PC-3 (cell line): ENCODE measurements at regions of chr9 and their contacts with region 1.

Region 1: GRCh38 chr9:101317735-101318134 is 67.1 kb downstream of the BAAT start:
- DNase-seq: no peak
- ATAC-seq: no peak
- H3K4me3 ChIP-seq: no peak overlapping the region
- H3K27ac ChIP-seq: no peak overlapping the region
- H3K4me1 ChIP-seq: no peaks in the 10 kb centered on the region
- H3K27me3 ChIP-seq: 0 out of 2 replicates have a peak, but pooled peaks cover 5% of the 10 kb centered on the region
- CTCF ChIP-seq: no peak

Region 2: DNA sequence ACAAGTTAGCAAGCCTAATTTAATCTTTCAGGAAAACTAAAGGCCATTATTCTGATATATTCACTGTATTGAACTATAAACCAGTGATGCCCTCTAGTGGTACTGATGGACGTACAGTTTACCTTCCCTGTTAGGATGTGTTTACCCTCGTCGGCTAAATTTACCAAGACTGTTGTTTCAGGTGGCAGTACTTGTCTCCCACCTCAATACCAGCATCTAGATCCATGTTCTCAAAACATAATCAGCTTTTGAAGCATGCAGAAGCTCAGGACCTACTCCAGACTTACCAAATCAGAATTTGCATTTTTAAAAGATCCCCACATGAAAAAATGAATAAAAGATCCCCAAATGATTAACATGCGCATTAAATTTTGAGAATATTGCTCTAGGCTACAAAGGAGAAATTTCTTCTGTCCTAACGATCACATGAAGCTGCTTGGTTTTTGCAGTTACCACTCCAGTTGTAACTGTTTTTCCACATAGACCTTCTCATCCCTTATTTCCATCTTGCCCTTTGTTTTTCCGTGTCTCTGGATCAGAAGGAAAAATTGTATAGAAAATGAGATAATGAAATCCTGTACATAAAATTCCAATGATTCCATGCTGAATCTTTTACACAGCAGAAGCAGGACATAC is 70.3 kb after region 1 on chr9:
- CTCF ChIA-PET with region 1: no interaction called
- POLR2A ChIA-PET with region 1: no interaction called
- intact Hi-C with region 1: loop called (anchors 2 kb)
- DNase-seq: peak; percentile 51
- ATAC-seq: no peak; the same call in 1 of the 2 replicates
- H3K4me3 ChIP-seq: no peak overlapping the region
- H3K27ac ChIP-seq: no peak overlapping the region
- H3K4me1 ChIP-seq: no peaks in the 10 kb centered on the region
- H3K27me3 ChIP-seq: no peaks in the 10 kb centered on the region
- CTCF ChIP-seq: peak; percentile 64